ENCODE measurements at regions of chr7 and their contacts with region 1.

Region 1: DNA sequence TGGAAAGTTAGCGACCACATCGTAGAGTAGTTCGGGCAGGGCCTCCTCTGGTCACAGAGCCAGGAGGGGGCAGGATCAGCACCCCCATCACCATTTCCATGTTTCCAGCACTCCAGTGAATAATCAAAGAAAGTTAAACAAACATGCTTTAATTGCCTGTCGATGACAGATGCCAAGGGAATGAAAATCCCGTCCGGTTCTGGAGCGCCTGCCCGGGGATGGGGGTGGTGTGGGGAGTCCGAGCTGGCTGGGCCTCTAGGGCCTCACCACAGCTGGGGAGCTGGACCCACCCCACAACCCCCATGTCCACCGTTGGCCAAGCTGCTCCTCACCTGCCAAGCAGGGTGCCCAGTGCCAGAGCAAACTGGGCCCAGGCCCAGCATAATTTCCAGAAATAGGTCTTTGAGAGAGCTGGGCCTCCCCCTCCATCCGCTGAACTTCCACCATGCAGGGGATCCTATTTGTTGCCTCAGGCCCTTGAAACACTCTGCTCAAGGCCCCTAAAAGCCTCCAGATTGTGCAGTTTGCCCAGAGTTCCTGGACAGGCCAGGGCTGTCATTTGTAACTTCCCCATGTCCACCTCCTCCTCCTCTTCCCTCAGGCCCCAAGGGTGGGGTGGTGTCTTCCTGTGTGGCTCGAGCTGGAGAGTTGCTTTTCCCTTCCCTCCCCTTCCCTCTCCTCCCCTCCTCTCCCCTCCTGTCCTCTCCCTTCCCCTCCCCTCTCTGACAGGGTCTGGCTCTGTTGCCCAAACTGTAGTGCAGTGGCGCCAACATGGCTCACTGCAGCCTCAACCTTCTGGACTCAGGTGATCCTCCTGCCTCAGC is 101.0 kb downstream of the MYL10 start:
- DNase-seq: no peak
- H3K4me3 ChIP-seq: no peak overlapping the region
- CTCF ChIP-seq: no peak

Region 2: DNA sequence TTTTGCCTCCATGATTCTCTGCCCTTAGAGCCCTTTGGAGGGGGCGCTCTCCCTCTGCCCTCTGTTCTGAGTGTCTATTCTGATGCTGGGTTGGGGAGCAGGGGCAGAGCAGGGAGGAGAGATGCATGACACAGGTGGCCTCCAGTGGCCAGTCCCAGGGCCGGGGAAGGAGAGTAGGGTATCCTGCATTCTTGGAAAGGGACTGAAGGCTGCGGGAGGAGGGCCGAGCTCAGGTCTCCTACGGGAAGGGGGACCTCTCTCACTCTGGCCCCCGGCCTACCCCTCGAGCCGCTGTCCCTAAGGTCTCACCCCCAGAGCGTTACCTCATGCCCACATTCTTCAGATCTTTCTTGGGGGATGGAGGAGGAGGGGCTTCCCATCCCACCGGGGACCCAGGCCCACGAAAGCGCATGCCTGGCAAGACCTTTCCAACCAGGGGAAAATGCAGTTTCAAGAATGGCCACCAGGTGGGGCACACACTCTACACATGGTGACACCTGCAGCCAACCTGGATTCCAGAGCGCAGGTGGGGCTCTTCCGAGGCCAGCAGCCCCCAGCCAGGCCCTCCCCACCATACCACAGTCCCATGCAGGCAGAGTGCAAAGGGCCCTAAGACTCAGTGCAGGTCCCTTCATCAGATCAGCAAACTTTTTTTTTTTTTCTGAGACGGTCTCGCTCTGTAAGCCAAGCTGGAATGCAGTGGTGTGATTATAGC is 14.6 kb after region 1 on chr7:
- CTCF ChIA-PET with region 1: interaction called, 12 read pairs
- POLR2A ChIA-PET with region 1: no interaction called
- DNase-seq: no peak
- H3K4me3 ChIP-seq: no peak overlapping the region
- CTCF ChIP-seq: peak; percentile 85

Region 3: DNA sequence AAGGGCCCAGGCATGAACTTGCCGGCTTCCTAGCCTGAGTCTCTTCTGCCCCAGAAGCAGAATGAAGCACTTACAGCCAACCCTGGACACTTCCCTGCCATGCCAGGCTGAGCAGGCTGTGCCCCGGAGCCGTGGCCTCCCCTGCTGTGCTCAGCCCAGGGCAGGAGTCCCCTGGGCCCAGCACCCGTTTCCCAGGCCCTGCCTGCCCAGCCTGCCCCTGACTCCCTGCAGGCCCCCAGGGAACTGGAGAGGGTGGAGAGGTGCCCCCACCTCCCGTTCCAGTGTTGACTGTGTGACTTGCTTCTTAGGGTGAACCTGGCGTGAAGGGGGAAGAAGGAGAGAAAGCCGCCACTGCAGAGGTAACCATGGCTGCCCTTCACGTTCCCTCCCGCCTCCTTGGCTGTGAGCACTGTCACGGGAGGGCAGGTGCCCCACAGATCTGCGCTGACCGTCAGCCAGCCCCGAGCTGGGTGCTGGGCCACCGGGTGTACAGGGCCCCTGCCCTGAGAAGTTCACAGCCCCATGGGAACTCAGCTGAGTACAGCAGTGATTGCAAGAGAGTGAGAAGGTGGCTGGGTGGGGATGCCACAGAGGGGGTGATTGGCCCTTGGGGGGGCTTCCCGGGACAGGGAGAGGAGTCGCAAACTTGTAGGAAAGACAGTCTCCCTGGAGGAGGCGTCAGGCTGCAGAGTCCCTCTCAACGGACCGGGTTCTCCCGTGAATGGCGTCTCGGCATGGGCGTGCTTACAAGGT is 25.1 kb after region 1 on chr7:
- CTCF ChIA-PET with region 1: no interaction called
- POLR2A ChIA-PET with region 1: no interaction called
- DNase-seq: no peak
- H3K4me3 ChIP-seq: no peak overlapping the region
- CTCF ChIP-seq: no peak

Measured in AG04449 (cell line).